Sciatic nerve (tissue), 2 donors: ENCODE measurements at regions of chr11 and their contacts with region 1.

Region 1: GRCh38 chr11:82790723-82791484 is 57.2 kb upstream of the FAM181B start:
- DNase-seq: no peak
- ATAC-seq: no peak

Region 2: DNA sequence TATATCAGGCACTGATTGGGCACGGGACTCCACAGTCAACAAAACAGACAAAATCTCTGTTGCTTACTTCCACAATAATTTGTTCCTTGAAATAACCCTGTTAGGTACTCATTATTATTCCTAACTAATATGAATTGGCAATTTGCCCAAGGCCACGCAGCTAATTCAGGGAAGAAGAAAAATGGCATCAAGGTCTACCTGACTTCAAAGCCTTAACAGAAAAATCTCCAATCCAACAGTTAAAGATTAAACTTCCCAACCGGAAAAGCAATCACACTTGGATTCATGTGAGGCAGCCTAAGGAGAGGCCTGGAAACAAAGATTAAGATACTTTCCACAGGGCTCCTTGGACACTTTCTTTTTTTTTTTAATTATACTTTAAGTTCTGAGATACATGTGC is 40.5 kb after region 1 on chr11:
- intact Hi-C with region 1: loop called (anchors 1 kb)
- DNase-seq: no peak
- ATAC-seq: no peak

Region 3: DNA sequence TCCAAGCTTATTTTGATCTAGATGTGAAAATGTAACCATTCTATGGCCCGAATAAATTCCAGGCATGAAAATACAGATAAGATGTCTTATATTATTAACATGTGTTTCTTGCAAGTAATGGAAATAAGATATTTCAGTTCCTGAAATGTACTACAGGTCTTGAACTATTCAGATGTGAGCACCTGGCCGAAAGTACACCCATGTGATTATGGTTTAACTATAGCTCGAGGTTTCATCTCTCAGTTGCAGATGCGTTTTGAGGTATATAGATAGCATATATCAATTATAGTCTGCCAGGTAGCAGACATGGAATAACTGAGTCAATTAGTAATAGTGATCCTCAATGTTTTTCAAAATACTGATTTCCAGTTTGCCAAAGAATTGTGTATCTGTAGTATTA is 178.9 kb after region 1 on chr11:
- intact Hi-C with region 1: no loop called
- DNase-seq: no peak
- ATAC-seq: no peak